IMR-90 (cell line): ENCODE measurements at regions of chr17 and their contacts with region 1.

Region 1: GRCh38 chr17:76726231-76726775 is at the start of gene JMJD6:
- DNase-seq: peak; percentile 95
- ATAC-seq: peak; percentile 92
- H3K4me3 ChIP-seq: peak within 1 kb of the TSS; percentile 81
- H3K27ac ChIP-seq: peak within 1 kb of the TSS; percentile 95
- H3K4me1 ChIP-seq: peaks cover 6% of the 10 kb centered on the region
- H3K27me3 ChIP-seq: no peaks in the 10 kb centered on the region
- CTCF ChIP-seq: no peak
- POLR2A ChIP-seq: peak; percentile 97
- RAD21 ChIP-seq: no peak
- total RNA-seq, gene JMJD6: 24.4 and 31.9 TPM in 2 replicates

Region 2: GRCh38 chr17:76567634-76568432 is 158.5 kb before region 1 on chr17:
- CTCF ChIA-PET with region 1: no interaction called
- POLR2A ChIA-PET with region 1: no interaction called
- dilution Hi-C with region 1: no loop called
- in situ Hi-C with region 1: no loop called
- intact Hi-C with region 1: no loop called
- DNase-seq: no peak
- ATAC-seq: no peak; the same call in 1 of the 2 replicates
- H3K4me3 ChIP-seq: no peak overlapping the region
- H3K27ac ChIP-seq: no peak overlapping the region
- H3K4me1 ChIP-seq: no peaks in the 10 kb centered on the region
- H3K27me3 ChIP-seq: no peaks in the 10 kb centered on the region
- CTCF ChIP-seq: no peak
- POLR2A ChIP-seq: no peak
- RAD21 ChIP-seq: no peak

Region 3: GRCh38 chr17:76714822-76715495 is 11.3 kb before region 1 on chr17:
- CTCF ChIA-PET with region 1: no interaction called
- POLR2A ChIA-PET with region 1: interaction called, 3 read pairs
- dilution Hi-C with region 1: no loop called
- in situ Hi-C with region 1: no loop called
- intact Hi-C with region 1: loop called (anchors 1 kb)
- DNase-seq: peak; percentile 59
- ATAC-seq: no peak
- H3K4me3 ChIP-seq: no peak overlapping the region
- H3K27ac ChIP-seq: peak overlapping the region; percentile 31; the same call in 1 of the 2 replicates
- H3K4me1 ChIP-seq: peaks cover 18% of the 10 kb centered on the region
- H3K27me3 ChIP-seq: no peaks in the 10 kb centered on the region
- CTCF ChIP-seq: peak; percentile 77
- POLR2A ChIP-seq: no peak; the same call in 1 of the 2 replicates
- RAD21 ChIP-seq: peak; percentile 65

Region 4: GRCh38 chr17:76737082-76737675 is 10.9 kb after region 1 on chr17 and contains the start of gene SRSF2:
- CTCF ChIA-PET with region 1: no interaction called
- POLR2A ChIA-PET with region 1: no interaction called
- dilution Hi-C with region 1: no loop called
- in situ Hi-C with region 1: no loop called
- intact Hi-C with region 1: loop called (anchors 1 kb)
- DNase-seq: peak; percentile 97
- ATAC-seq: peak; percentile 81
- H3K4me3 ChIP-seq: peak within 1 kb of the TSS; percentile 89
- H3K27ac ChIP-seq: peak within 1 kb of the TSS; percentile 95
- H3K4me1 ChIP-seq: peaks cover 2% of the 10 kb centered on the region; the same call in 1 of the 2 replicates
- H3K27me3 ChIP-seq: no peaks in the 10 kb centered on the region
- CTCF ChIP-seq: no peak
- POLR2A ChIP-seq: peak; percentile 100
- RAD21 ChIP-seq: 0 out of 2 replicates have a peak, but pooled peaks have one; percentile 18
- total RNA-seq, gene SRSF2: 71.7 and 98.0 TPM in 2 replicates

Region 5: DNA sequence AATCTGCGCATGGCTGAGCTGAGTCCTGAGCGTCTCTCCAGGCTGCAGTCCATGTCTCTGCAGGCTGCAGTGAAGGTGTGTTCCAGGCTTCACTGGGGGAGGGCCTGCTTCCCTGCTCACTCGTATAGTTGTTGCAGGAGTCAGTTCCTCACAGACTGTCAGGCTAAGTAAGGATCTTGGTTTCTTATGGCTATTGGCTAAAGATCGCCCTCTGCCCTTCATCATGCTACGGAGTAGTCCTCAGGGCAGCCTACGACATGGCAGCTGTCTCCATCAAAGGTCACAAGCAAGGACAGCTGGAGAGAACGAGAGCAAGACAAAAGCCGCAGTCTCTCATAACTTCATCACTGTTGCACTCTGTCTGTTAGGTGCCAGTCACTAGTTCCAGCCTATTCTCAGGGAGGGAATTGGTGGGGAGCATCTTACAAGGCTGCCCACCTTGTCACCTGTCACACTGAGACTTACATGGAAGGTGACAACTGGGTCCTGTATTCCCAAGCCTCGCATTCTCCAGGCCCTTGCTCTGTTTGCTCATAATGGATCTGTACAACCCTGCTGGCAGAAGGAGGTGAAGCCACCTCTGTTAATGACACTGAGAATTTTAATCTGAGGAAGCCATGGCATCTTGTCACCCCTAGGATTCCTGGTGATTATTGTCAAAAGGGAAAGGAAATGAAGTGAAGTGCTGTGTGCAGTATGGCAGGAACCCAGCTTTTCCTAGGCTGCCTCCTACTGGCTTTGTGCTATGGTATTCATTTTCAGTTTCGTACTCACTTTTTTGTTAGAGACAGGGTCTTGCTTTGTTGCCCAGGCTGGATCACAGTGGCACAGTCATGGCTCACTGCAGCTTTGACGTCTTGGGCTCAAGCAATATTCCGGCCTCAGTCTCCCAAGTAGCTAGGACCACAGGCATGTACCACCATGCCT is 55.0 kb after region 1 on chr17:
- CTCF ChIA-PET with region 1: no interaction called
- POLR2A ChIA-PET with region 1: no interaction called
- dilution Hi-C with region 1: no loop called
- in situ Hi-C with region 1: no loop called
- intact Hi-C with region 1: no loop called
- DNase-seq: no peak
- ATAC-seq: no peak
- H3K4me3 ChIP-seq: no peak overlapping the region
- H3K27ac ChIP-seq: no peak overlapping the region
- H3K4me1 ChIP-seq: no peaks in the 10 kb centered on the region
- H3K27me3 ChIP-seq: no peaks in the 10 kb centered on the region
- CTCF ChIP-seq: 0 out of 2 replicates have a peak, but pooled peaks have one; percentile 16
- POLR2A ChIP-seq: no peak
- RAD21 ChIP-seq: no peak; the same call in 1 of the 2 replicates

Region 6: GRCh38 chr17:77061669-77062068 is 335.4 kb after region 1 on chr17:
- CTCF ChIA-PET with region 1: no interaction called
- POLR2A ChIA-PET with region 1: no interaction called
- dilution Hi-C with region 1: no loop called
- in situ Hi-C with region 1: no loop called
- intact Hi-C with region 1: loop called (anchors 2 kb)
- DNase-seq: no peak
- ATAC-seq: no peak
- H3K4me3 ChIP-seq: no peak overlapping the region
- H3K27ac ChIP-seq: no peak overlapping the region
- H3K4me1 ChIP-seq: no peaks in the 10 kb centered on the region; the same call in 1 of the 2 replicates
- H3K27me3 ChIP-seq: peaks cover 28% of the 10 kb centered on the region
- CTCF ChIP-seq: no peak
- POLR2A ChIP-seq: no peak
- RAD21 ChIP-seq: no peak